ENCODE measurements at regions of chr5 and their contacts with region 1.

Region 1: DNA sequence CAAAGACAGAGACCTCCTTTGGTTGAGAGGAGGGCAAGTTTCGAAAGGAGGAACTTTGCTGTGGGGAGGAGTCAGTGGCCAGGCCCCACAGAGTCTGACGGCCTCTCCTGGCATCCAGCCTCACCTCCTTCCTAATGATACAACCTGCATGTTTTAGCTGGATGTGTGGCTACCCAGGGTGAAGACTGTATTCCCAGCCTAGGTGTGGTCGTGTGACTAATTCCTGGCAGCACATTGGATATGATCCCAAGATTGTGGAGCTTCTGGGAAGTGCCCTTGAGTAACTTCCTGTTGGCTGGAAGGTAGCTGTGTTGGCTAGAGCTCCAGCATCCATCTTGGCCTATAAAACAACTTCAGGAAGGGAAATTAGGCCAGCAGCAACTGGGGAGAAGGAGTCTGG is 19.0 kb upstream of the LPCAT1 start:
- DNase-seq: peak; percentile 71 to 81 (median 80)
- ATAC-seq: peak; percentile 82 to 95
- H3K4me3 ChIP-seq: no peak overlapping the region
- H3K27ac ChIP-seq: no peak overlapping the region
- H3K4me1 ChIP-seq: no peaks in the 10 kb centered on the region
- H3K27me3 ChIP-seq: no peaks in the 10 kb centered on the region

Region 2: GRCh38 chr5:1366514-1366913 is 176.2 kb before region 1 on chr5:
- intact Hi-C with region 1: loop called in 1 of 4 experiments (anchors 5 kb)
- DNase-seq: no peak
- ATAC-seq: no peak
- H3K4me3 ChIP-seq: no peak overlapping the region
- H3K27ac ChIP-seq: no peak overlapping the region
- H3K4me1 ChIP-seq: no peaks in the 10 kb centered on the region
- H3K27me3 ChIP-seq: no peaks in the 10 kb centered on the region

Measured in right cardiac atrium (tissue), 5 donors.